PC-9 (cell line): ENCODE measurements at regions of chr9 and their contacts with region 1.

Region 1: DNA sequence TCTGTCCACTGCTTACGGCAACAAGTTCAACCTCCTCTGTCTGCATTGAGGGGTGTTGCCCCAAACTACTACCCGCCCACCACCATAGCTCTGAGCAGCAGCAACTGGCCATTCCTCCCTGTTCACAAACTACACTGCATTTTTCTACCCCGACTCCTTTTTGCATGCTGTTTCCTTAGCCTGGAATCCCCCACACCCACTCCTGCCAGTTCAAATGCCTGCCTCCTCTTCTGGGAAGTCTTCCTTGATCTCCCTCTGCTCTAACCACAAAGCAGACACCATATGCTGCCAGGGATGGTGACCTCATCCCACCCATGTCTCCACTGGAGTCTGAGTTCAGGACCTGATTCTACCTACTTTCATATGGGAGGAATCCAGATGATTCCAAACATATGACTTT is 13.3 kb downstream of the ALDH1B1 start:
- DNase-seq: no peak
- H3K4me3 ChIP-seq: no peak overlapping the region
- H3K27ac ChIP-seq: no peak overlapping the region
- H3K4me1 ChIP-seq: no peaks in the 10 kb centered on the region
- H3K27me3 ChIP-seq: no peaks in the 10 kb centered on the region
- CTCF ChIP-seq: no peak

Region 2: GRCh38 chr9:38371495-38371894 is 34.3 kb before region 1 on chr9:
- CTCF ChIA-PET with region 1: interaction called, 3 read pairs
- POLR2A ChIA-PET with region 1: no interaction called
- intact Hi-C with region 1: loop called (anchors 1 kb)
- DNase-seq: no peak
- H3K4me3 ChIP-seq: no peak overlapping the region
- H3K27ac ChIP-seq: no peak overlapping the region
- H3K4me1 ChIP-seq: 0 out of 2 replicates have a peak, but pooled peaks cover 5% of the 10 kb centered on the region
- H3K27me3 ChIP-seq: no peaks in the 10 kb centered on the region
- CTCF ChIP-seq: peak; percentile 57